BJ (cell line): ENCODE measurements at regions of chr11 and their contacts with region 1.

Region 1: GRCh38 chr11:94623120-94623735 is 56.1 kb downstream of the PIWIL4 start:
- DNase-seq: peak; percentile 23
- H3K4me3 ChIP-seq: no peak overlapping the region
- H3K27me3 ChIP-seq: no peaks in the 10 kb centered on the region
- CTCF ChIP-seq: peak; percentile 86

Region 2: GRCh38 chr11:94400839-94401772 is 222.1 kb before region 1 on chr11 and contains the start of gene GPR83:
- CTCF ChIA-PET with region 1: no interaction called
- POLR2A ChIA-PET with region 1: no interaction called
- DNase-seq: no peak
- H3K4me3 ChIP-seq: peak within 1 kb of the TSS; percentile 34
- H3K27me3 ChIP-seq: peaks cover 10% of the 10 kb centered on the region
- CTCF ChIP-seq: no peak
- polyA plus RNA-seq, gene GPR83: 0.04 TPM in 1 of 2 replicates, not detected in the other

Region 3: DNA sequence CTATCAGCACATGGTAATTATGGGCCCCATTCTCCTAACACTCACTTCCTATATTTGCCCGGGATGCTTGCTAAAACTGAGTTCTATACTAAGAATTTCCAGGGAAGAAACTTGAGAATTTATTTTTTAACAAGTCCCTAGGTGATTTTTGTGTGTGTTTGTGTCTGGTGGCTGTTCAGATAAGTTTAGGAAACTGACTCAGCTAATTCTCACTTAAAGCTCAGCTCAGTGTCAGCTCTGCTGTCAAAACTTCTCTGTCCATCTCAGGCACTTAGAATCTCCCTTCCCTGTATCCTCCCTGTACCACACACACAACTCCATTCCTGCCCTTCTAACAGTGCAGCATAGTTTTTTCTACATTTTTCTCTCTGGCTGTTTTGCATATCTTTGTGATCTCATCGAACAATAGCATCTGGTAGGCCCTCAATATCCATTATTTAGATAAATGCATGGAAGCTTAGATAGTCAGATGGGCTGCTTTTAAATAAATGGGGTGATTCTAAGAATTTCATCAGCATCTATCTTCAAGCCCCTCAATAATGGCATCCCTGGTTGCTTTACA is 13.2 kb after region 1 on chr11:
- CTCF ChIA-PET with region 1: interaction called, 10 read pairs
- POLR2A ChIA-PET with region 1: no interaction called
- DNase-seq: no peak
- H3K4me3 ChIP-seq: no peak overlapping the region
- H3K27me3 ChIP-seq: no peaks in the 10 kb centered on the region
- CTCF ChIP-seq: no peak

Region 4: GRCh38 chr11:94762208-94762607 is 139.0 kb after region 1 on chr11:
- CTCF ChIA-PET with region 1: interaction called, 62 read pairs
- POLR2A ChIA-PET with region 1: no interaction called
- DNase-seq: no peak
- H3K4me3 ChIP-seq: no peak overlapping the region
- H3K27me3 ChIP-seq: no peaks in the 10 kb centered on the region
- CTCF ChIP-seq: peak; percentile 33

Region 5: GRCh38 chr11:94876645-94877442 is 253.6 kb after region 1 on chr11:
- CTCF ChIA-PET with region 1: interaction called, 14 read pairs
- POLR2A ChIA-PET with region 1: no interaction called
- DNase-seq: peak; percentile 89
- H3K4me3 ChIP-seq: no peak overlapping the region
- H3K27me3 ChIP-seq: no peaks in the 10 kb centered on the region
- CTCF ChIP-seq: peak; percentile 37

Region 6: DNA sequence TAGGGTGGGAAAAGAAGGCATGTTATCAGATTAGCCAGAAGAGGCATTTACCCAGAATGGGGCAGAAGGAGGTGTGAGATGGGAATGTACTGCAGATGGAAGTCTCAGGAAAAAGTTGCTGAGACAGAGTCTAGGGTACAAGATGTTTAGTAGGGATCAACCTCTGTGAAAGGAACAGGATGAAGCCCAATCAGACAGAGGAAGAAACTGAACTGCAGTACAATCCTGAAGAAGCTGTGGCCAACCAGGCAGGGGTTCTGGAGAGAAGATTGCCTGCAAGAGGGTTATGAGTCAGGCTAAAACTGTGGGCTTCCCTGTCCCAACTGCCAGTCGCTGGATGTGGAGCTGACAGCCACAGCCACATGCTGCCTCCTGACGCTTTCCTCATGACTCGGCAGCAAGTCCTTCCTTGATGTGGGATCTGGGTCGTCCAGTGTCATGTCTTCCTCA is 286.2 kb after region 1 on chr11:
- CTCF ChIA-PET with region 1: interaction called, 12 read pairs
- POLR2A ChIA-PET with region 1: no interaction called
- DNase-seq: no peak
- H3K4me3 ChIP-seq: no peak overlapping the region
- H3K27me3 ChIP-seq: no peaks in the 10 kb centered on the region
- CTCF ChIP-seq: no peak